Sigmoid colon (tissue), 7 donors: ENCODE measurements at regions of chr16 and their contacts with region 1.

Region 1: DNA sequence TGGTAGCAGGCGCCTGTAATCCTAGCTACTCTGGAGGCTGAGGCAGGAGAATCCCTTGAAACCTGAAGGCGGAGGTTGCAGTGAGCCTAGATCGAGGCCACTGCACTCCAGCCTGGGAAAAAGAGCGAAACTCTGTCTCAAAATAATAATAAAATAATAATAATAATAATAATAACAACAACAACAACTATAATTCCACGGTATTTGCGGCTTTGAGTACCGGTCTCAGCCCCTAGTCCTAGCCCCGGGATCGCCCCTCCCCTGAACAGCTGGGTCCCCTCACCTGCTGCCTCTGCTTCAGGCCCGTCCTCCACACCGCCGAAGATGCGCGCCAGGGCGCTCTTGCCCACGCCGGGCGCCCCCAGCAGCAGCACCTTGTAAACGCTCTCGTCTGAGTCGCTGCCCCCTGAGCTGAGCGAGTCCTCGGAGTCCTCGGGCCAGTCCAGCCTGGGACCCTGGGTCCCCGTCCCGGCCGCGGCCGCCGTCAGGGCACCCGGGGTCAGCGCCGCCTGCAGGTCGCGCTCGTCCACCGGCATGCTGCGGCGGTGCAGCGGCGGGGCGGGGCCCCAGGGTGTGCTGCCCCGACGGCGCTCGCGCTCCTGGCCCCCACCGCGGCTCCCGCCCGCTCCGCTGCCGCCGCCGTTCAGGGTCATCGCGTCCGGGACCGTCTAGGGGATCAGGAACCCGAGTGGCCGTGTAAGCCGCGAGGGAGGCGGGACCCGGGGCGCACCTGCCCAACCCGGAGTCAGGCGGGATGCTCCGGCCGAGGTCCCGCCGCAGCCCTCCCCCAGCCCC is 611 bp downstream of the RRAD start:
- DNase-seq: no peak
- H3K4me3 ChIP-seq: peak overlapping the region; percentile 51 to 85 (median 58)
- H3K27ac ChIP-seq: peak overlapping the region; percentile 81 to 96 (median 90)
- H3K4me1 ChIP-seq: peaks cover 0 to 64% (median 51%) of the 10 kb centered on the region in 4 donors
- H3K27me3 ChIP-seq: no peaks in the 10 kb centered on the region
- CTCF ChIP-seq: peak in 3 of 4 experiments; percentile 13 to 42 (median 25)
- EP300 ChIP-seq: no peak
- POLR2A ChIP-seq: no peak

Region 2: GRCh38 chr16:66894948-66895688 is 29.6 kb before region 1 on chr16:
- intact Hi-C with region 1: loop called (anchors 1 kb)
- DNase-seq: peak; percentile 82
- H3K4me3 ChIP-seq: no peak overlapping the region
- H3K27ac ChIP-seq: no peak overlapping the region
- H3K4me1 ChIP-seq: peaks cover 0 to 31% (median 28%) of the 10 kb centered on the region in 4 donors
- H3K27me3 ChIP-seq: no peaks in the 10 kb centered on the region
- CTCF ChIP-seq: peak; percentile 63 to 83 (median 79)
- EP300 ChIP-seq: no peak
- POLR2A ChIP-seq: no peak